Caco-2 (cell line): ENCODE measurements at regions of chr14 and their contacts with region 1.

Region 1: GRCh38 chr14:54347997-54348611 is 48.7 kb upstream of the CDKN3 start:
- DNase-seq: peak in 1 of 2 experiments; percentile 67
- H3K4me3 ChIP-seq: no peak overlapping the region
- H3K4me3 Mint-ChIP-seq: no peak overlapping the region
- H3K27ac Mint-ChIP-seq: no peak overlapping the region
- H3K4me1 ChIP-seq: peaks cover 5% of the 10 kb centered on the region
- H3K4me1 Mint-ChIP-seq: peaks cover 16% of the 10 kb centered on the region
- H3K27me3 ChIP-seq: no peaks in the 10 kb centered on the region
- H3K27me3 Mint-ChIP-seq: no peaks in the 10 kb centered on the region
- CTCF ChIP-seq: peak; percentile 62 to 81

Region 2: GRCh38 chr14:52923902-52924575 is 1424.1 kb before region 1 on chr14:
- CTCF ChIA-PET with region 1: no interaction called
- POLR2A ChIA-PET with region 1: no interaction called
- intact Hi-C with region 1: loop called (anchors 5 kb)
- DNase-seq: peak in 1 of 2 experiments; percentile 32
- H3K4me3 ChIP-seq: no peak overlapping the region
- H3K4me3 Mint-ChIP-seq: no peak overlapping the region
- H3K27ac Mint-ChIP-seq: no peak overlapping the region
- H3K4me1 ChIP-seq: peaks cover 22% of the 10 kb centered on the region
- H3K4me1 Mint-ChIP-seq: peaks cover 15% of the 10 kb centered on the region
- H3K27me3 ChIP-seq: no peaks in the 10 kb centered on the region
- H3K27me3 Mint-ChIP-seq: no peaks in the 10 kb centered on the region
- CTCF ChIP-seq: peak; percentile 12 to 45

Region 3: GRCh38 chr14:53432378-53432802 is 915.7 kb before region 1 on chr14:
- CTCF ChIA-PET with region 1: interaction called, 5 read pairs
- POLR2A ChIA-PET with region 1: no interaction called
- intact Hi-C with region 1: loop called (anchors 5 kb)
- DNase-seq: peak; percentile 70 to 77
- H3K4me3 ChIP-seq: no peak overlapping the region
- H3K4me3 Mint-ChIP-seq: no peak overlapping the region
- H3K27ac Mint-ChIP-seq: no peak overlapping the region
- H3K4me1 ChIP-seq: peaks cover 26% of the 10 kb centered on the region
- H3K4me1 Mint-ChIP-seq: peaks cover 13% of the 10 kb centered on the region
- H3K27me3 ChIP-seq: no peaks in the 10 kb centered on the region
- H3K27me3 Mint-ChIP-seq: no peaks in the 10 kb centered on the region
- CTCF ChIP-seq: peak; percentile 76 to 78

Region 4: DNA sequence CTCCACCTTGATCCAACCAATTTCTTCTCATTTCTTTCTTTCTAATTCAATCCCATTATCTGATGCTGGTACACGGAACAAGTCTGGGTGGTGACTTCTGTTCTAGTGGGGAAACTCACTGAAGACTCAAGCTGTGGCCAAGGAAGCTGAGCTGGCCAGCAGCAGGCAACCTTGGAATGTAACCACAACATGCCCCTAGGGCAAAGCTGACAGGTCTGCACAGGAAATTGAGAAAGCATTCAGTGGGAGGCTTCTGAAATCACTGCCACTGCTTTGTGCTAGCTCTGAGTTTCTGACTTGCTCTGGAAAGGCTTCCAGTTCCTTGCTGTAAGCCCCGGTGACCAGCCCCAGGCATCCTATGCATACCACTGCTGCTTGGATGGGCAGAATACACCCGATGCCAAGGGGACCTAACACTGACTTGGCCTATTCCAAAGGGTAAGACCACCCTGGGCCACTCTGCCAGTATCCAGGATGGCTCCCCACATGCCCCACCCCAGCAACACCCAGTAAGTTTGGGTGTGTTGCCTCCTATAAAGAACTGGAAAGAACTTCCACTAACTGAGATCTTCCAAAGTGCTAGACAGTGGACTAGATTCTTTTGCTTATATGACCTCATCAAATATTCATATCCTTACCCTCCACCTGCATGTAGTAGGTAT is 35.8 kb before region 1 on chr14:
- CTCF ChIA-PET with region 1: interaction called, 10 read pairs
- POLR2A ChIA-PET with region 1: no interaction called
- intact Hi-C with region 1: no loop called
- DNase-seq: peak; percentile 42 to 64
- H3K4me3 ChIP-seq: no peak overlapping the region
- H3K4me3 Mint-ChIP-seq: no peak overlapping the region
- H3K27ac Mint-ChIP-seq: no peak overlapping the region
- H3K4me1 ChIP-seq: no peaks in the 10 kb centered on the region
- H3K4me1 Mint-ChIP-seq: no peaks in the 10 kb centered on the region
- H3K27me3 ChIP-seq: no peaks in the 10 kb centered on the region
- H3K27me3 Mint-ChIP-seq: no peaks in the 10 kb centered on the region
- CTCF ChIP-seq: no peak

Region 5: GRCh38 chr14:54366736-54367735 is 18.9 kb after region 1 on chr14:
- CTCF ChIA-PET with region 1: interaction called, 10 read pairs
- POLR2A ChIA-PET with region 1: no interaction called
- intact Hi-C with region 1: no loop called
- DNase-seq: peak; percentile 73 to 78
- H3K4me3 ChIP-seq: 0 out of 2 replicates have a peak overlapping the region, but pooled peaks have one; percentile 2
- H3K4me3 Mint-ChIP-seq: peak overlapping the region; percentile 73
- H3K27ac Mint-ChIP-seq: peak overlapping the region; percentile 90
- H3K4me1 ChIP-seq: peaks cover 20% of the 10 kb centered on the region
- H3K4me1 Mint-ChIP-seq: peaks cover 23% of the 10 kb centered on the region
- H3K27me3 ChIP-seq: no peaks in the 10 kb centered on the region
- H3K27me3 Mint-ChIP-seq: no peaks in the 10 kb centered on the region
- CTCF ChIP-seq: peak; percentile 50 to 88

Region 6: DNA sequence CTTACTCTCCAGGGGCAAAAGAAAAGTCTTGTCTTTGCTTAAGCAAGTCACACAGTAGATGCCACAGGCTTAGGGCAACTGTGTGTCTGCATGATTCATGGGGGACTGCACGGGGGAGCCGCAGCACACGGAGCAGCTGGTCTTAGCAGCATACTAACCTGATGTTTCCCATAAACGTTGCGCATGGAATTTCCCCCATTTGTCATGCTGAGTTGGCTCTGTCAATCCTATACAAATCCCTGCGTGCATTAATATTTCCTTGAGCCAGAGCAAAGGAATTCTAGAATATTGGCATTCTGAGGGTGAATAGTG is 290.0 kb after region 1 on chr14:
- CTCF ChIA-PET with region 1: no interaction called
- POLR2A ChIA-PET with region 1: no interaction called
- intact Hi-C with region 1: no loop called
- DNase-seq: no peak
- H3K4me3 ChIP-seq: no peak overlapping the region
- H3K4me3 Mint-ChIP-seq: no peak overlapping the region
- H3K27ac Mint-ChIP-seq: no peak overlapping the region
- H3K4me1 ChIP-seq: peaks cover 38% of the 10 kb centered on the region
- H3K4me1 Mint-ChIP-seq: peaks cover 50% of the 10 kb centered on the region
- H3K27me3 ChIP-seq: no peaks in the 10 kb centered on the region
- H3K27me3 Mint-ChIP-seq: no peaks in the 10 kb centered on the region
- CTCF ChIP-seq: no peak